ENCODE measurements at regions of chr15 and their contacts with region 1.

Region 1: DNA sequence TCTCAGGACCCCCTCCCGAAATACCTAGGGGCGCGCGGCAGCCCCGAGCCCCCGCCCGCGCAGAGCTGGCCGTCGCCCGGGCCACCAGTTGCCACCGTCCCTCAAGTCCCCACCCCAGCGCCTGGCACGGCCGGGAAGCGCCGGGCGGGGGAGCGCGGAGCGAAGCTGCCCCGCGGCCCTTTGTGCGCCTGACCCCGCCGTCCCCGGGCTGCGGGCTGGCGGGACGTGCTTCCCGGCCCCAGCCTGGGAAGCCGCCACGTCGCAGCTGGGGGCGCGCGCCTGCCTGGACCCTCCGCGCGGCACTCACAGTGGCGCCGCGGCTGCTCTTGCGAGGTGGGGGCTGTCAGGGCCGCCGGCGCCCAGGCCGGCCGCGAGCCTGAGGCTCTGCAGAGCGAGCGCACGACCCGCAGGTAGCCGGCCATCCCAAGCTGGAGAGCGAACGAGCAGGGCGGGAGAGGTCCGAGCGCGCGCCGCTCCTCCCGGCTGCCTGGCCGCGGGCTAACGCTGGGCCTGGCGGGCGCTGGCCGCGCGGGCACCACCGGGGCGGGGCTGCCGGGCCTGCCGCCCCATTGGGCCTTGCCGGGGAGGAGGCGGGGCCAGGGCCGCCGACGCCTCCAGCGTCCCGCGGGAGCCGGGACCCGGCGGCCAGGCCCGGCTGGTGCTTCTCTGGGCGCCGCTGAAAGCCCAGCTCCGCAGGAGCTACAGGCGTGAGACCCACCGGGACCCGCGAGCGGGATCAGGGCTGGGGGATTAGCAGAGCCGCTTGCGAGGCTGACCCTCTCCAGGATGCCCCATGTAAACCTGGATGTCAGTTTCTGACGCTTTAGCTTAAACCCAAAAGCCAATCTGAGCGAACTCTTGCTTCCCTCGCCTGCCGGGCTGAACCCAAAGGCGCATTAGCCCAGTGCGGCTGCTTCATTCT is at the start of gene IDH2:
- DNase-seq: peak; percentile 78
- ATAC-seq: peak; percentile 88
- H3K4me3 Mint-ChIP-seq: peak within 1 kb of the TSS; percentile 89
- H3K27ac Mint-ChIP-seq: peak within 1 kb of the TSS; percentile 83
- H3K4me1 Mint-ChIP-seq: peaks cover 50% of the 10 kb centered on the region
- H3K27me3 Mint-ChIP-seq: peaks cover 9% of the 10 kb centered on the region
- CTCF ChIP-seq: no peak
- total RNA-seq, gene IDH2: 49.1 and 51.2 TPM in 2 replicates

Region 2: DNA sequence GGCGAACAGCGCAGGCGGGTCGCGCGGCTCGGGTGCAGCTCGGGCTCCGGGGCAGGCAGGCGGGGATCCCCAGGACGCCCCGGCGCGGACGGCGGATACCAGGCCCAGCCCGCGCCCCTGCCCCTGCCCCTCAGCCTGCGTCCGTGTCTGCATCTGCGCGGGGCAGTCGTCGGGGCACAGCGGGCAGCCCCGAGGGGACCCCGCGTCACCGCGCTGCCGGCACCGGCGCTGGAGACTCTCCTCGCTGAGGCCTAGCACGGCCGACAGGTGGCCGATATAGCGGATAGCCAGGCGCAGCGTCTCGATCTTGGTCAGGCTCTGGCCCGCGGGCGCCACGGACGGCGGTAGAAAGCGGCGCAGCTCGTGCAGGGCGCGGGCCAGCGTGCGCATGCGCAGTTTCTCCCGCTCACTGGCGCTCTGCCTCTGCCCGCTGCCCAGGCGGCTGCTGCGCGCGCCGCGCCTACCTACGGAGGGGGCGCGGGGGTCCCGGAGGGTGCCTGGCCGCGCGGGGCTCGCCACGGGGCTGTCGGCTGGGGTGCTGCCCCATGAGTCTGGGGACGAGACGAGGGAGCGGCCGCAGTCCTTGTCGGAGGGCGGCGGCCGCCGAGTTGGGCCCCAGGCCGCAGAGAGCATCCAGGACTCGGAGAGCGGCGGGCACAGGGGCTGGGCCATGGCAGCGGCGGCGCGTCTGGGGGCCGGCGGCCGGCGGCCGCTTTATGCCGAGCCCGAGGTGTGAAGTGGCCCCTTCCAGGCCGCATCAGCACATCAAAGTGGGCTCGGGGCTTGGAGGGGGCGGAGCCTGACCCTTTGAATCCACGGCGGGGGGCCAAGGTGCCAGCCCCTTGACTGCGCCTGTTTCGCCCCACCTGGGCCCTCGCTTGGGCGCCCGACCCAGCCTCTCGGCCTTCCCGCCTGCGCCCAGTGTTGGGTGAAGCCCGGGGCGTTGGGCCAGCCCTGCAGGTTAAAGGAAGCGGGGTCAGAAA is 351.4 kb before region 1 on chr15 and contains the start of gene MESP1:
- CTCF ChIA-PET with region 1: no interaction called
- POLR2A ChIA-PET with region 1: no interaction called
- intact Hi-C with region 1: loop called (anchors 5 kb)
- DNase-seq: peak; percentile 89
- ATAC-seq: peak; percentile 93
- H3K4me3 Mint-ChIP-seq: peak within 1 kb of the TSS; percentile 80
- H3K27ac Mint-ChIP-seq: no peak within 1 kb of the TSS
- H3K4me1 Mint-ChIP-seq: peaks cover 4% of the 10 kb centered on the region
- H3K27me3 Mint-ChIP-seq: peaks cover 9% of the 10 kb centered on the region
- CTCF ChIP-seq: no peak
- total RNA-seq, gene MESP1: 0.24 and 0.71 TPM in 2 replicates

Region 3: GRCh38 chr15:89912674-89913396 is 189.4 kb before region 1 on chr15 and contains the start of gene ARPIN:
- CTCF ChIA-PET with region 1: no interaction called
- POLR2A ChIA-PET with region 1: no interaction called
- intact Hi-C with region 1: no loop called
- DNase-seq: peak; percentile 24
- ATAC-seq: peak; percentile 54
- H3K4me3 Mint-ChIP-seq: peak within 1 kb of the TSS; percentile 70
- H3K27ac Mint-ChIP-seq: no peak within 1 kb of the TSS
- H3K4me1 Mint-ChIP-seq: peaks cover 5% of the 10 kb centered on the region
- H3K27me3 Mint-ChIP-seq: peaks cover 37% of the 10 kb centered on the region
- CTCF ChIP-seq: no peak
- total RNA-seq, gene ARPIN: not detected in 2 replicates

Region 4: GRCh38 chr15:90114451-90114901 is 12.2 kb after region 1 on chr15:
- CTCF ChIA-PET with region 1: no interaction called
- POLR2A ChIA-PET with region 1: interaction called, 11 read pairs
- intact Hi-C with region 1: no loop called
- DNase-seq: no peak
- ATAC-seq: no peak
- H3K4me3 Mint-ChIP-seq: no peak overlapping the region
- H3K27ac Mint-ChIP-seq: no peak overlapping the region
- H3K4me1 Mint-ChIP-seq: no peaks in the 10 kb centered on the region
- H3K27me3 Mint-ChIP-seq: no peaks in the 10 kb centered on the region
- CTCF ChIP-seq: no peak